Left cardiac atrium (tissue), 4 donors: ENCODE measurements at regions of chr4 and their contacts with region 1.

Region 1: GRCh38 chr4:88225232-88226105 is 58.9 kb downstream of the PPM1K start:
- DNase-seq: no peak
- ATAC-seq: peak in 1 of 2 donors; percentile 45

Region 2: DNA sequence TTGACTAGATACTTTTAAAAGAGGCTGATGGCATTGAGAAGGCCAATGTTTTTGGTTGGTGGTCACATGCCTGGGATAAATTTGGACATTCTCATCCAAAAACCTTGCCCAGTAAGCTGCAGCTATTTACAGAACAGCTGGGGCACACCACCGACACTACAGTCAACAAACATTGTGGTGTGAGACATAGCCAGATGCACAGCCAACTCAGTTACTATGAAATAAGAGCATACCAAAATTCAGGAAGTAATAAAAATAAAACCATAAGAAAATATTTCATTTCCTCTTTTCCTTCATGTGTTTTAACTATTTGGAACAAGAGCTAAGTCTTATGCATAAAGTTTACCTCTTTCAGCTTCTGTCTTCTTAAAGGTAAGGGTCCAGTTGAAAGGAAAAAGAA is 50.0 kb after region 1 on chr4:
- intact Hi-C with region 1: loop called in 1 of 2 experiments (anchors 5 kb)
- DNase-seq: no peak
- ATAC-seq: peak in 1 of 2 donors; percentile 34

Region 3: GRCh38 chr4:88514557-88515511 is 289.4 kb after region 1 on chr4:
- intact Hi-C with region 1: loop called in 1 of 2 experiments (anchors 5 kb)
- DNase-seq: no peak
- ATAC-seq: no peak